ENCODE measurements at regions of chr3 and their contacts with region 1.

Region 1: DNA sequence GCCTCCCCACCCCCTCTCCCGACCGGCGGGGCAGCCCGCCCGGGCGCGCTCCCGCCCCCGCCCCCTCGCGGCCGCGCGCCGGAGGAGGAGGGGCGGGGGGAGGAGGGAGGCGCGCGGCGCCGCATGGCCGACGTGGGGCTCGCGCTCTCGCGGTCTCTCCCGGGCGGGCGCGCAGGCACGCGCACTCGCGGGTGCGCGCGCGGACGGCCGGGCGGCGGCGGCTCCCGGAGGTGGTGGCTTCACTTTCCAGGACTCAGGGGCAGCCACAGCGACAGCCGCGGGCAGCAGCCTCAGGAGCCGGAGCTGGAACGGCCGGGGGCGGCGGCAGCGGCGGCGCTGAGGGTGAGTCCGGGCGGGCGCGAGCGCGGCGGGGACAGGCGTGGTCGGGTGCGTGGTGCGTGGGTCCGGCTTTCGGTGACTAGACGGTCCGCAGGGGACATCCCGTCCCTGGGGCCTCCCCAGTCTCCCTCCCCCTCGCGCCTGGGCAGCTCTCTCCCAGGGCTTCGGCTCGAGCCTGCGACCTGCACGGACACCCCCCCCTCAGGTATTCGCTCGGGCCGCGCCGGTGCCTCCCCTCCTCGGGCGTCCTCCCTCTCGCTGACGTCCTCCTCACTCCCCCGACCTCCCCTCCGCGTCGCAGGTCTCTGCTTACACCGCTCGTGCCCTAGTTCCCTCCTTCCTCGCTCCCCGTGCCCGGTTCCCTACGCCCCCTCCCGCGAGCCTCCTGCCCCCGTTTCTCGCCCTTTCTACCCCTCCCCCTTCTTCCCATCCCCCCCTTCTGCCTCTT is at the start of gene UBE2E2:
- DNase-seq: peak; percentile 55
- H3K4me3 Mint-ChIP-seq: peak within 1 kb of the TSS; percentile 87
- H3K27ac Mint-ChIP-seq: peak within 1 kb of the TSS; percentile 39
- H3K4me1 Mint-ChIP-seq: peaks cover 12% of the 10 kb centered on the region
- H3K27me3 Mint-ChIP-seq: peaks cover 7% of the 10 kb centered on the region
- CTCF ChIP-seq: no peak
- total RNA-seq, gene UBE2E2: 64.3 and 69.4 TPM in 2 replicates

Region 2: DNA sequence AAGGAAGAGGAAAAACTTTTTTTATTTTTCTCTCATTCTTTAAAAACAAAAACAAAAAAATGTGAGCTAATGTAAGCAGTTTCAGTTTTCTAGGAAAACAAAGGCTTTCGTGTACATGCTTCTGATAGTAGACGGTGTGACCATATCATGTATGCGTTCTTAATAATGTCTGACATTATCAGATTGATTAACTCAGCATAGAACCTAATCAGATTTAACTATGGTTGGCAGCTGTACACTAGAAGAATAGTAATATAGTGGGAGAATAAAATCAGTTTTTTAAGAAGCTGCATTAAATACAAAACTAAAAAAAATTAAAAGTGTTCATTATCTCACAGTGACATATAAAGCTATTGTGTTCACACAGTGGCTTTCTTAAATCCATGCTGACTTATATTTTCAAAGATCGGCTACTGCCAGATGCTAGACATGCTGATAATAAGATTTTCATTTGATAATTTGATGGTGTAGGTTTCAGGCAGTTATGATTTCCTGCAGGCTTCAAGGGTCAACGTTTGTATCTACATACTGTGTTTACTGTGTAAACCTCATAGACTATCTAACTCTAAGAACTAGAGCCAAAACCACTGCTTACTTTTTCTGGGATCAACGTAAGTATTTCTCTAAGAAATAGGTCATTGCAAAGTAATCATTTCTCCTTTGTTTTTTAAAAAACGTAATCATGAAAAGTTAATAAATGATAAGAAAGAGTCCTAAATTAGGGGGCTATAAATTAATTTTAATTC is 74.0 kb after region 1 on chr3:
- CTCF ChIA-PET with region 1: no interaction called
- POLR2A ChIA-PET with region 1: no interaction called
- intact Hi-C with region 1: no loop called
- DNase-seq: no peak
- H3K4me3 Mint-ChIP-seq: no peak overlapping the region
- H3K27ac Mint-ChIP-seq: no peak overlapping the region
- H3K4me1 Mint-ChIP-seq: peaks cover 11% of the 10 kb centered on the region
- H3K27me3 Mint-ChIP-seq: no peaks in the 10 kb centered on the region
- CTCF ChIP-seq: no peak

Region 3: DNA sequence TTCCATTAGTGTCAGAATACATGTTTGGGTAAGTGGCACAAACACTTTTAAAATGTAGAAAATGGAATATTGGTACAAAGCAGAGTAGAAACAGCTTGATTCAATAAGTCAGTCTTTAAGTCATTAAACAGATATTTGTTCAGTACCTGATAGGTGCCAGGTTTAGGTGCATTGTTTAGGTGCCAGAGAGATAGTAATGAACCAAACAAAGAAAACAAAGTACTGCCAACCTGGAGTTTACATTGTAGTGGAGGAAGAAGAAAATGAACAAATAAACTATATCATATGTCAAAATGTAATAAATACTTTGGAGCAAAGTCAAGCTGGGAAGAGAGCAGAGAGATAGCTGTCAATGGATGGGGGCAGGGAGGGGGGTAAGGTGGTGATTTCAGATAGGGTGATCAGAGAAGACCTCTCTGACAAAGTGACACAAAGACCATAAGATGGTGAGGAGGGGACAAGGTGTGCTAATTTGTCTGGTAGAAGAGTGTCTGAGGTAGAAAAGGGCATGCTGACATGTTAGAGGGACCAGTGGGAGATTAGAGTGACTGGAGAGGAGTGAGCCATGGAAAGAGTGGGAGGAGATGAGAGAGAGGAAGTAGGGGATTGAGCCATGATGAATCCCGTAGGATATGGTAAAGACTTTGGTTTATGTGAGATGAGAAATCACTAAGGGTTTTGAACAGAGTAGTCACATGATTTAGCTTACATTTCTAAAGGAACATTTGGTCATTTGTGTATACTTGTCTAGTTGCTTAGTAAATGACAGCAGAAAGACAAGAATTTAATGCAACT is 128.2 kb after region 1 on chr3:
- CTCF ChIA-PET with region 1: no interaction called
- POLR2A ChIA-PET with region 1: no interaction called
- intact Hi-C with region 1: loop called (anchors 10 kb)
- DNase-seq: no peak
- H3K4me3 Mint-ChIP-seq: no peak overlapping the region
- H3K27ac Mint-ChIP-seq: no peak overlapping the region
- H3K4me1 Mint-ChIP-seq: no peaks in the 10 kb centered on the region
- H3K27me3 Mint-ChIP-seq: no peaks in the 10 kb centered on the region
- CTCF ChIP-seq: no peak

Region 4: DNA sequence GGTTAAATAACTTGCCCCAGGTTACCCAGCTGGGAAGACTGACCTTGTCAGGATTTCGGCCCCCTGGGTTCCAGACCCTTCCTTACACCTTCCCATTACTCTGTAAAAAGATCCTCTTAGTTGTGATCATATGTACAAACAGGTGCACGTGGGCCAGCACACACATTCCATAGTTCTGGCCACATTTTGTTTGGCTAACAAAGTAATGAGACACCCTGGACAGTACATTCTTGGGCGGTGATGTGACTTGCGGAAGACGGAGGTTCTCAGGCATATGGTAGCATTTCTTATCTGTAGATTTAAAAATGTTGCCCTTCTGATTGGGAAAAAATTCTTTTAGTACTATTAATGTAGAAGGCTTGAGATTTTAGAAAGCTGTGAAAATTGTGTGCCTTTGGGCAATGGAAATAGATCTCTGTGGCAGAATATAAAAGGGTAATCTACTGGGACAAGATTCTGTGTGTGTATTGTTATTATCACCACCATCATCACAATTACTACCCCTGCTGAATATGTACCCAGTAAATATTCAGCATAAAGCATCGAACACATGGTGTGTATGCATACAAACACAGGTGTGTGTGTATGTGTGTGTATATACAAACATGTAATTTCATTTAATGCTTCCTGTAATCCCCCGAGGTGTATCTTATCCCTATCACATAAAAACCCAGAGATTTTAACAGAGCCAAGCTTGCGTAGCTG is 397.2 kb after region 1 on chr3:
- CTCF ChIA-PET with region 1: no interaction called
- POLR2A ChIA-PET with region 1: no interaction called
- intact Hi-C with region 1: loop called (anchors 5 kb)
- DNase-seq: peak; percentile 66
- H3K4me3 Mint-ChIP-seq: no peak overlapping the region
- H3K27ac Mint-ChIP-seq: no peak overlapping the region
- H3K4me1 Mint-ChIP-seq: peaks cover 9% of the 10 kb centered on the region
- H3K27me3 Mint-ChIP-seq: no peaks in the 10 kb centered on the region
- CTCF ChIP-seq: no peak